ENCODE measurements at regions of chr15 and their contacts with region 1.

Region 1: GRCh38 chr15:101242160-101242998 is 9.5 kb downstream of the CHSY1 start:
- DNase-seq: no peak
- H3K4me3 ChIP-seq: no peak overlapping the region
- CTCF ChIP-seq: no peak

Region 2: GRCh38 chr15:101091080-101092017 is 151.0 kb before region 1 on chr15:
- in situ Hi-C with region 1: loop called (anchors 5 kb)
- DNase-seq: peak; percentile 64
- H3K4me3 ChIP-seq: no peak overlapping the region
- CTCF ChIP-seq: no peak